Activated CD4-positive, alpha-beta T cell treated with anti-CD3 and anti-CD28 coated beads, Interleukin-2, amount 10 ng/mL, durations not matched to agents 24 days and 14 days (primary cell): ENCODE measurements at regions of chr1 and their contacts with region 1.

Region 1: GRCh38 chr1:20932437-20932977 is 145.4 kb upstream of the HP1BP3 start:
- DNase-seq: no peak
- H3K4me3 Mint-ChIP-seq: peak overlapping the region; percentile 54
- H3K27ac Mint-ChIP-seq: peak overlapping the region; percentile 84
- H3K4me1 Mint-ChIP-seq: peaks cover 25% of the 10 kb centered on the region
- H3K27me3 Mint-ChIP-seq: no peaks in the 10 kb centered on the region

Region 2: GRCh38 chr1:20949871-20950590 is 17.5 kb after region 1 on chr1:
- intact Hi-C with region 1: no loop called
- DNase-seq: no peak
- H3K4me3 Mint-ChIP-seq: no peak overlapping the region
- H3K27ac Mint-ChIP-seq: no peak overlapping the region
- H3K4me1 Mint-ChIP-seq: no peaks in the 10 kb centered on the region
- H3K27me3 Mint-ChIP-seq: no peaks in the 10 kb centered on the region

Region 3: GRCh38 chr1:20992322-20993056 is 60.0 kb after region 1 on chr1:
- intact Hi-C with region 1: loop called (anchors 1 kb)
- DNase-seq: peak; percentile 51
- H3K4me3 Mint-ChIP-seq: peak overlapping the region; percentile 62
- H3K27ac Mint-ChIP-seq: peak overlapping the region; percentile 91
- H3K4me1 Mint-ChIP-seq: peaks cover 26% of the 10 kb centered on the region
- H3K27me3 Mint-ChIP-seq: no peaks in the 10 kb centered on the region

Region 4: GRCh38 chr1:21022279-21023040 is 90.0 kb after region 1 on chr1:
- intact Hi-C with region 1: loop called (anchors 1 kb)
- DNase-seq: peak; percentile 79
- H3K4me3 Mint-ChIP-seq: peak overlapping the region; percentile 70
- H3K27ac Mint-ChIP-seq: peak overlapping the region; percentile 88
- H3K4me1 Mint-ChIP-seq: peaks cover 20% of the 10 kb centered on the region
- H3K27me3 Mint-ChIP-seq: no peaks in the 10 kb centered on the region

Region 5: DNA sequence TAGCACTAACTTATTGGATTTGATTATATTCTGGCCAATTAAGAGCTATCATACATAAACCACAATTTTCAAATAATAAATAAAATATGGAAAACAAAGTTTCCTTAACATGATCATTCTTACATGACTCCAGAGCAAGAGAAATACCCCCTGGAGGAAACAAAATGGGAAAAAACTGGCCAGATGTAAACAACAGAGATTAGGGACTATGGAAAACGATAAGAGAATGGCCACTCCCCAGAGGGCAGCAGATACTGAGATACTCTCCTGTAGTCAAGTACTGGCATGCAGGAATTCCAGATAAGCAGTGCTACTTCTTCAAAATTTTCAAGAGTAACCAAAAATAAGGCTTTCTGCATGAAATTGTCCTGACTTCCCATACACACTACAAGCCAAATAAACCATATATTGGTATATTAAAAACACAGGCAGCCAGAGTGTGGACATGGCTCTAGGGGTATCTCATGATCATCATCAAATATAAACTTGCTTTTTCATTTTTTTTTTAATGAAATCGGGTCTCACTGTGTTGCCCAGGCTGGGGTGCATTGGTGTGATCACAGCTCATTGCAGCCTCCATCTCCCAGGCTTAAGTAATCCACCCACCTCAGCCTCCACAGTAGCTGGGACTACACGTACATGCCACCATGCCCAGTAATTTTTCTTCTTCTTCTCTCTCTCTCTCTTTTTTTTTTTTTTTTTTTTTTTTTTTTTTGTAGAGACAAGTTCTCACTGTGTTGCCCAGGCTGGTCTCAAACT is 125.7 kb after region 1 on chr1:
- intact Hi-C with region 1: no loop called
- DNase-seq: no peak
- H3K4me3 Mint-ChIP-seq: no peak overlapping the region
- H3K27ac Mint-ChIP-seq: no peak overlapping the region
- H3K4me1 Mint-ChIP-seq: peaks cover 3% of the 10 kb centered on the region
- H3K27me3 Mint-ChIP-seq: no peaks in the 10 kb centered on the region

Region 6: DNA sequence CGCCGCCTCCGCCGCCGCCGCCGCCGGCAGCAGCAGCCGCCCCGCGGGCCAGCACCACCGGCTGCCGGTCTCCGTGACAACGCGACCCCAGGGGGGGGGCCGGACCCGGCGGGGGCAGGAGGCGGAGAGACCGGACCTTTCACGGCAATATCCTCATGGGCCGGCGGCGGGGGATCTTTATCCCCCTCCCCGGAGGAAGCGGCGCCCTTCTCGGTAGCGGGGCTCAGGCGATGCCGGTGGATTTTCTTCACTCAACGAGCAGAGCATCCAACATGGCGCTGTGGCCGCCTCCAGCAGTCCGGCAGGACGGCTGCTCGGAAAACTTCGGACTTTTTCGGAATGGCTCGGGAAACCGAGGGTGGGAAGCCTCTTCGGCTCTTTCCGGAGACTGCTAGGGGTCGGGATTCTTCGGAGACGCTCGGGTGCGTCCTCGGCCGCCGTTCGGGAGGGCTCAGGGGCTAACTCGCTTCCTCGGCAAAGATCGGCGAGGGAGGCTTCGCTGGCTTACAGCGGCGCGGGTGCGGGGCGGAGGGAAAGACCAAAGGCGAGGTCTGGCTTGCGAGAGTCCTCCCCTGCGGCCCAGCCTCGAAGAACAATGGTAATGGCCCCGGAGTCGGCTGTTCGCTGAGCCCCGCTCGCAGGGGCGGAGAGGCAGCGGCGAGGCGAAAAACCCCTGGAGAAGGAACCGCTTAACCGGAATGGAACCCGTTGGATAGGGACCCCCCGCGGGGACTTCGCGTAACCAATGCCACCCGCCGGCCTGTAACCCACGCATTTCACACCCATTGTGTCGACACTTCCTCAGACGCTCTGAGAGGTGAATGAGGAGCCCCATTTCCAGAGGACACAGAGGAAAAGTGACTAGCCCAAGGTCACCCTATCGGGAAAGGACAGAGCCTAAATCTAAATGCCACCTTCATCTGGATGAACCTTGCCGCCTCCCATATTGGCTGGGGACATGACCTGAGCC is 244.4 kb after region 1 on chr1 and contains the start of gene EIF4G3:
- intact Hi-C with region 1: loop called (anchors 5 kb)
- DNase-seq: peak; percentile 100
- H3K4me3 Mint-ChIP-seq: peak within 1 kb of the TSS; percentile 89
- H3K27ac Mint-ChIP-seq: peak within 1 kb of the TSS; percentile 91
- H3K4me1 Mint-ChIP-seq: peaks cover 20% of the 10 kb centered on the region
- H3K27me3 Mint-ChIP-seq: peaks cover 2% of the 10 kb centered on the region
- total RNA-seq, gene EIF4G3: 64.0 and 66.8 TPM in 2 replicates

Region 7: DNA sequence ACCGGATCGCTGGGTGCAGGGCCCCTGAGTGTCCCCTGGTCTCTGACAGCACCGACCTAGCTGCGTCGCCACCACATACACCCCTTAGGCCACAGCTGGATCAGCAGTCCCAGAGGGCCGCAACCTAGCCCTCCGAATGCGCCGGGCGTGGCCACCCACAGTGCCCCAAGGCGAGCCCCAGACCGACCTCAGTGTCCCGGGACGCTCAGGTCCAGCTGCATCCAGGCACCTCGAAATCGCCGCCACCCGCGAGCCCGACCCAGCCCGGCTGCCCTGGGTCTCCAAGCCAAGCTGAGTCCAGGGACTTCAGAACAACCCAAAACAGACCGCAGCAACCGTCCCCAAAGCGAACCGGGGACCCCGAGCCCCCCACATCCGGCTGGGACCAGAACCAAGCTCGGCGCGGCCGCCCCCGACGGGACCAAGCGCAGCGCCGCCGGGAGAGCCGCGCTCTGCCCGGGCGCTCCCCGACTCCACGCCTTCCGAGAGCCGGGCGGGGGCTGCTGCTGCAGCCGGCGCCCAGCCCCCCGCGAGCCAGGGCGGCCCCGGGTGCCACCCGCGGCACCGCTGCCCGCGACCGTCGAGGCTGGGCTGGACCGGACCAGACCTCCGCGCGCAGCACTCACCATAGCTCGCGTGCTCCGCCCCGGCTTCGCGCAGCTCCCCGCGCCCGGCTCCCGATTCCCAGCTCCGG is 412.4 kb after region 1 on chr1:
- intact Hi-C with region 1: loop called (anchors 10 kb)
- DNase-seq: no peak
- H3K4me3 Mint-ChIP-seq: peak overlapping the region; percentile 88
- H3K27ac Mint-ChIP-seq: peak overlapping the region; percentile 85
- H3K4me1 Mint-ChIP-seq: peaks cover 39% of the 10 kb centered on the region
- H3K27me3 Mint-ChIP-seq: no peaks in the 10 kb centered on the region